H1 (cell line): ENCODE measurements at regions of chr1 and their contacts with region 1.

Region 1: DNA sequence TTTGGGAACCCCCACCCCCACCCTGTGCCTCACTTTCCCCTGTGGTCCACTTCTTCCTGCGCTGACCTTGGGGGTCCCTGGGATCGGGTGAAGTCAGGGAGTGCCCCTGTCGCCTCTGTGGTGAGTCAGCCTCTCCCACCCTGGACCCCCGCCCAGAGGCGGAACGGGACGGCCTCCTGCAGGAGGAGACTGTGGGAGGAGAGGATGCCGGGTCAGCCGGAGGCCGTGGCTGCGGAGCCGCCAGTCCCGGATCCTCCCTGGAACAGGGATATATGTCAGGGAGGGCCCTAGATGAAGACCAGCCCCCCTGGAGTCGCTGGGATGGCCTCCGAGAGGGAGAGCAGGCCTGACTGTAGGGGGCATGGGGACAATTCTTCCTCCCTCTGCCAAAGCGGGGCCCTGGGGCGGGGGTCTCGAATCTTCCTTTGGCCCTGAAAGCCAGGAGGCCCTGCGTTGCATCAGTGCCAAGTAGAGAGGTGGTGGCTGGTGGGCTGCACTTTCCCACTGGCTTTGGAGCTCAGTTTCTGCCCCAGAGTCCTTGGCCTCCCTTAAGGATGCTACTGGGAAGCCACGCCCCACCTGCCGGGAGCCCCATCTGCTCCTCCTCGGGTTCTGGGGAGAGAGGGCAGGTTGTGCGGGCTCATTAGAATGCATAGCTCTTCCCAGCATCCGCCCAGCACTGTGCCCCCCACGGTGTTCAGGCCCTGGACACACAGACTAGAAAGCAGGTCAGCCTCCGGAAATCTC is 930 bp downstream of the ARHGEF10L start:
- DNase-seq: peak; percentile 66 to 90
- H3K4me3 ChIP-seq: peak overlapping the region; percentile 77 to 93 (median 87)
- H3K27ac ChIP-seq: peak overlapping the region; percentile 83
- H3K4me1 ChIP-seq: peaks cover 16 to 24% (median 20%) of the 10 kb centered on the region in 4 experiments
- H3K27me3 ChIP-seq: no peaks in the 10 kb centered on the region
- CTCF ChIP-seq: no peak
- EP300 ChIP-seq: no peak
- POLR2A ChIP-seq: peak; percentile 34 to 78
- RAD21 ChIP-seq: peak in 1 of 2 experiments; percentile 15; a peak in 1 of 4 replicates

Region 2: DNA sequence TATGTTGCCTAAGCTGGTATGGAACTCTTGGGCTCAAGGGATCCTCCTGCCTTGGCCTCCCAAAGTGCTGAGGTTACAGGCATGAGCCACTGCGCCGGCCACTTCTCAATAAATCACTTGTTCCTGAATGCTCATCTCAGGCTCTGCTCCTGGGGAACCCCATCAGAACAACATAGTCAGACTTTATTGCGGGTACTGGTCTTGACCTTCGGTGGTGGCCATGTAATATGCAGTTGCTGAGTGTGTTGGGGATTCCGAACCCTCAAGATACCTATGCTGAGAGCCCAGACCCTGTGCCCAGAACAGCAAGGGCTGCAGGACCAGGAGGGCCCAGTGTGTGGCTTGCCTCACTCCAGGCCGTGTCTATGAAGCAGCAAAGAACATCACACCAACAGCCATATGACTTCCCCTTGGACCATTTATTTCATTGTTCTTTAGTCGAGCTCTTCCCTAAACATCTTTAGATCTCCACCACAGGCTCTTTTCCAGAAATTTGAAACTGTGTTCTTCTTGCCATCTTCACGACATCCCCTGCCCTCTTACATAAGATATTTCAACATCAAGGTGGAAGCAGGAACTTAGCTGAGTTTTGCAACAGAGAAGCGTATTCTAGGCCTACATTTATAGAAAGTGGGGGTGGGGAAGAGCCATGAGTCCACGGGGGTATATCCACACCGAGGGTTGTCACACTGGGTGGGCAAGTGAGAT is 473.9 kb before region 1 on chr1:
- CTCF ChIA-PET with region 1: no interaction called
- POLR2A ChIA-PET with region 1: no interaction called
- DNase-seq: no peak
- H3K4me3 ChIP-seq: no peak overlapping the region
- H3K27ac ChIP-seq: no peak overlapping the region
- H3K4me1 ChIP-seq: no peaks in the 10 kb centered on the region
- H3K27me3 ChIP-seq: no peaks in the 10 kb centered on the region
- CTCF ChIP-seq: no peak
- EP300 ChIP-seq: no peak
- POLR2A ChIP-seq: no peak
- RAD21 ChIP-seq: no peak

Region 3: GRCh38 chr1:17451731-17452130 is 88.7 kb before region 1 on chr1:
- CTCF ChIA-PET with region 1: no interaction called
- POLR2A ChIA-PET with region 1: no interaction called
- DNase-seq: no peak
- H3K4me3 ChIP-seq: no peak overlapping the region
- H3K27ac ChIP-seq: no peak overlapping the region
- H3K4me1 ChIP-seq: peaks cover 0 to 2% (median 0%) of the 10 kb centered on the region in 4 experiments; a peak in 1 of 7 replicates
- H3K27me3 ChIP-seq: no peaks in the 10 kb centered on the region
- CTCF ChIP-seq: no peak
- EP300 ChIP-seq: no peak
- POLR2A ChIP-seq: no peak
- RAD21 ChIP-seq: no peak

Region 4: GRCh38 chr1:17494114-17494729 is 46.2 kb before region 1 on chr1:
- CTCF ChIA-PET with region 1: interaction called, 10 read pairs
- POLR2A ChIA-PET with region 1: no interaction called
- DNase-seq: peak; percentile 89 to 96
- H3K4me3 ChIP-seq: no peak overlapping the region
- H3K27ac ChIP-seq: no peak overlapping the region
- H3K4me1 ChIP-seq: no peaks in the 10 kb centered on the region
- H3K27me3 ChIP-seq: no peaks in the 10 kb centered on the region
- CTCF ChIP-seq: peak; percentile 98 to 100 (median 99)
- EP300 ChIP-seq: 0 out of 3 replicates have a peak, but pooled peaks of 1 of the 2 experiments have one; percentile 40
- POLR2A ChIP-seq: no peak
- RAD21 ChIP-seq: peak; percentile 100

Region 5: DNA sequence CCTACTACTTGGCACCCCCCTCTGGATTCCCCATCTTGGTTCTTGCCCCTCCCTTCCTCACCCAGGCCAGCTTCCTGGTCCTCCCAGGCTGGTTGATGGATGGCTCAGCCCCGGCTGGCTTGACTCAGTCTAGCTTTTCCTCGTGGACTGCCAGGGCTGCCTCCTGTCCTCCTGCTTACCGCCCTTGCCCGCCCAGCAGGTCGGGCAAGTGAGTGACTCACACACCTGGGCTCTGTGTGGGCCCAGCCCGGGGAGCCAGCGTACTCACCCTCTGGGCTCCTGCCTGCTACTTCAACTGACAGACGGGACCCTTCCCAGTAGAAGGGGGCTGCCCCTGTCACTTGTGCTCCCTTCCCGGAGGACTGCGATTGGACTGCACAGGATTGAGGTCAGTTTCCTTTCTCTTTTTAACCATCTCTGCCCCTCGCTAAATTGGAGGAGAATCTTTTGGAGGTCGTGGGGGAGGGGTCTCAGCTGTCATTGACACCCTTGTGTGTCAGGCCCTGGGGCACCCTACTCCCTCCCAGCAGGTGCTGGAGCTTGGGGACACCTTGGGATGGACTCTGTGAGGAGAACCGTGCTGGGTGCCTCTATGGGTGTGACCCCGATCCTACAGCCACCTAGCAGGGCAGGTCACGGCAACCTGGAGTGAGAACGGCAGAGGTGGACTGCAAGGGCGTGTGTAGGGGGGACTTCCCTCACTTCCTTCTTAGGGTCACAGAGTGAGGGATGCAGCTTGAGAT is 20.2 kb before region 1 on chr1:
- CTCF ChIA-PET with region 1: interaction called, 1,640 read pairs
- POLR2A ChIA-PET with region 1: interaction called, 49 read pairs
- DNase-seq: no peak
- H3K4me3 ChIP-seq: no peak overlapping the region
- H3K27ac ChIP-seq: no peak overlapping the region
- H3K4me1 ChIP-seq: peaks cover 6 to 33% (median 23%) of the 10 kb centered on the region in 4 experiments
- H3K27me3 ChIP-seq: no peaks in the 10 kb centered on the region
- CTCF ChIP-seq: no peak
- EP300 ChIP-seq: no peak
- POLR2A ChIP-seq: no peak
- RAD21 ChIP-seq: no peak

Region 6: DNA sequence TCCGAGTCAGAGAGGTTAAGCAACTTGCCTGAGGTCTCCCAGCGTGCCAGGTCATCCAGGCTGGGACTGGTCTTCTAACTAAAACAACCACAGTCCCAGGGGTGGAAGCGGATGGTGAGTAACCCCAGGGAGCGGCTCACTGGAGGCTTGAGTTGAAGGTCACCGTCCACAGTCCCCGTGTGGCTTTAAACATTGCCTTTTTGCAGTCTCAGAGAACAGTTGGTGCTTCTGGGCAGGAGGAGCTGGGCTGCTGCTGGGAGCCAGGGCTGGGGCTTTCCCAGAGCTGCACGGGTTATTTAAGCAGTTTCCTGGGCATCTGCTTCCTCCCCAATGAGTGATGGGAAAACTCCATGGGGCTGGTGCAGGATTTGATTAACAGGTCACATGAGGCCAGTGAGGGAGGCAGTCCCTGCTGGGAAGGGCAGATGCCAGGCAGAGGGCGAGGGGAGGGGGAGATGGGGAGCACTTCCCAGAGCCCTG is 11.4 kb after region 1 on chr1:
- CTCF ChIA-PET with region 1: interaction called, 10 read pairs
- POLR2A ChIA-PET with region 1: interaction called, 123 read pairs
- DNase-seq: no peak
- H3K4me3 ChIP-seq: peak overlapping the region in 2 of 4 experiments; percentile 7 to 44; a peak in 3 of 8 replicates
- H3K27ac ChIP-seq: no peak overlapping the region; the same call in 1 of the 2 replicates
- H3K4me1 ChIP-seq: peaks cover 18 to 50% (median 37%) of the 10 kb centered on the region in 4 experiments
- H3K27me3 ChIP-seq: no peaks in the 10 kb centered on the region
- CTCF ChIP-seq: no peak
- EP300 ChIP-seq: no peak
- POLR2A ChIP-seq: no peak; a peak in 1 of 3 replicates
- RAD21 ChIP-seq: no peak

Region 7: DNA sequence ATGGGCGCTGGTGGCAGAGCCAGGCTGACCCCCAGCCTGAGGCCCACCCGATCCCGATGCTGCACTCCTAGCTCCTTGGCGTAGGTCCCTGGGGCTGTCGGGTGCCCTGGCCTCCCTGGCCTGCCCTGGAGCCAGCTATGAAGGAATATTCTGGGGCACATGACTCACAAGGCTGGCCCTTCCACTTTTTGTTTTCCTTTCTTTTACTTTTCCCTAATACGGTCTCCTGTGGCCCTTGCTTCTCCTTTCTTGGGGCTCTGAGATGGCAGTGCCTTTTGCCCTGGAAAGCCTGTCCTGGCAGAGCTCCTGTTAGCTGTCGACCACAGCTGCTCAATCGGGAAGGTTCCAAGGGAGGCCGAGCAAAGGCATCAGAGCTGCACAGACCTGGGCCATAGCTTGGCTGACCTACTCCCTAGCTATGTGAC is 21.1 kb after region 1 on chr1:
- CTCF ChIA-PET with region 1: interaction called, 417 read pairs
- POLR2A ChIA-PET with region 1: interaction called, 24 read pairs
- DNase-seq: no peak
- H3K4me3 ChIP-seq: no peak overlapping the region
- H3K27ac ChIP-seq: 0 out of 2 replicates have a peak overlapping the region, but pooled peaks have one; percentile 30
- H3K4me1 ChIP-seq: peaks cover 11 to 62% (median 39%) of the 10 kb centered on the region in 4 experiments
- H3K27me3 ChIP-seq: no peaks in the 10 kb centered on the region
- CTCF ChIP-seq: no peak
- EP300 ChIP-seq: no peak
- POLR2A ChIP-seq: no peak
- RAD21 ChIP-seq: no peak

Region 8: DNA sequence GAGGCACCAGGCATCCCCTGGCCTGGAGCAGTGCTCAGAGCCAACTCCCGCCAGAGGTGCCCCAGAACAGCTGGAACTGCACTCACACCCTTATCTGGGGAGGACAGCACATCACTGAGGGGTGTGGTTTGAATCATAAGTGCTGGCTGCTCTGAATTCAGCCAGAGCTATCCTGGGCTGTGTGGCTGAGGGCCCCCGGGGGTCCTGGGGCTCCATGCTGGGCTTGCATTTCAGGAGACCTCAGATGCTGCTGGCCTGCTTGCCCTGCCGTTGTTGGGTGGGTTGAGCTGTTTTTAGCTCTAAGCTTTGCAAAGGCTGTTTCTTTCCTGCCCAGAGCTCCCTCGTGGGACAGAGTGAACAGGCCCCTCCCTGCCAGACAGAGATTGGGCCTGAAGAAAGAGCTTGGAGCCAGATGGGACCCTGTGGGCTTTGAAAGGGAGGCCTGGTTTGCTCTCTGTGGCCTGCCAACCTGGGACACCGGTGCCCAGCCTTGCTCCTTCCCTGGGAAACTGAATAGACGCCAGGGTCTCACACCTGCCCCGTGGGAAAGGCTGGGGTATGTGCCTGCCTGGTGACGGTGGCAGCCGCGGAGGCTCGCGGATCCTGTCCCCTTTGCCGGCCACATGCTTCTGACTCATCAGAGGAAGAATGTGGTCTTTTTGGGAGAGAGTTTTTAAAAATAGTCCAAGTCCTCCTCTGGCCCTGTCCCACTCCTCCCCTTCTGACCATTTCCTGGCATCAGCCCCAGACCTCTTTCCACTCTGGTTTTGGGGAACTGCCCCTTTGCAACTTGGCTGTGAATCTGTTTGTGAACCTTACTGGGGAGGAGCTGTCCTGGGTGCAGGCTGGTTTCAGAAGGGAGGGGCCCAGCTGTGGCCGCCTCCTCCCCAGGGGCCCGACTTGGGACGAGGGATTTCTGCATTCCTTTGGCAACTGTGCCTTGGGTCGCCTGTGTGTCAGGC is 29.1 kb after region 1 on chr1:
- CTCF ChIA-PET with region 1: interaction called, 417 read pairs
- POLR2A ChIA-PET with region 1: interaction called, 24 read pairs
- DNase-seq: no peak
- H3K4me3 ChIP-seq: 0 out of 8 replicates have a peak overlapping the region, but pooled peaks of 1 of the 4 experiments have one; percentile 8
- H3K27ac ChIP-seq: peak overlapping the region; percentile 24; the same call in 1 of the 2 replicates
- H3K4me1 ChIP-seq: peaks cover 23 to 78% (median 60%) of the 10 kb centered on the region in 4 experiments
- H3K27me3 ChIP-seq: no peaks in the 10 kb centered on the region
- CTCF ChIP-seq: no peak
- EP300 ChIP-seq: no peak
- POLR2A ChIP-seq: no peak
- RAD21 ChIP-seq: no peak

Region 9: DNA sequence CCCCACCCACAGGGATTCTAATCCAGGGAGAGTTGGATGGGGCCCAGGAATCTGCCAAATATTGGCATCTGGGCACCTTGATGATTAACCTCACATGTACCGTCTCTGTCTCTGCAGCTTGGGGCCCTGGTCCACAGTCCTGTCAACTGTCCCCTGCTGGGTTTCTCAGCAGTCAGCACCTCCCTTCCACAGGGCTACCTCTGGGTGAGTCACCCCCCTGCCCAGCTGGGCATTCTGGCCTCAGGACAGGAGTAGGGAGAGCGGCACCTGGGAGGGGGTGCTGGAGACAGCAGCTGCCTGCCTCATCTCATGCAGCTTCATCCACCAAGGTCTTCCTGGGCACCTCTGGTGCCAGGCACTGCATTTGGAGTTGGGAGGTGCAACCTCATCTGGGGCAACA is 114.1 kb after region 1 on chr1:
- CTCF ChIA-PET with region 1: no interaction called
- POLR2A ChIA-PET with region 1: no interaction called
- DNase-seq: no peak
- H3K4me3 ChIP-seq: no peak overlapping the region
- H3K27ac ChIP-seq: no peak overlapping the region
- H3K4me1 ChIP-seq: no peaks in the 10 kb centered on the region
- H3K27me3 ChIP-seq: no peaks in the 10 kb centered on the region
- CTCF ChIP-seq: no peak
- EP300 ChIP-seq: no peak
- POLR2A ChIP-seq: no peak
- RAD21 ChIP-seq: no peak